Motor neuron (in vitro differentiated cells): ENCODE measurements at regions of chr5 and their contacts with region 1.

Region 1: DNA sequence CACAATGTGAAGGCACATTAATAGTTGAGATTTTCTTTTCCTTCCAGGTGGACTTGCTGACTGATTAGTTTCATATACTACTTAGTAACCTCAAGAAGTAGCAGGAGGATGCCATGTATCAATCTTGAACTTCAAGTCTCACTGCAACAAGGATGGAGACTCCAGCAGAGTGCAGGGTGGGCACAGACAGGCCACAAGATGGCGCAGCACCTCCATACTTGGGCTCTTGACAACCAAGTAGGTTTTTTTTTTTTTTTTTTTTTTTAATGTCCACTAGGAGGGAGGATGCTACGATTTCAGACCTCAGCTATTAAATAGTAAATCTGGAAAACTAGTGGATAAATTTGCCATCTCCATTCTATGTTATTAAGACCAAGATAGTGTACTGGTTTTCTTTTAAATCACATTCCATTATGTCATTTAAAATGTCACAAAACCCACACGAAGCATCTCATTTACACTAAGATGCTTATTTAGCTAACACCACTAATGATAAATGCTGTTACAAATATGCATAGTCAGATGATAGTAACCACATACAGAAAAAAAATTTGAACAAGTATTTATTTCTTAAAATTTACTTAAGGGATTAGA is 58.6 kb downstream of the IL6ST start:
- ATAC-seq: peak; percentile 80 to 93 (median 84)
- H3K4me3 ChIP-seq: no peak overlapping the region
- H3K27ac ChIP-seq: no peak overlapping the region
- H3K4me1 ChIP-seq: no peaks in the 10 kb centered on the region

Region 2: DNA sequence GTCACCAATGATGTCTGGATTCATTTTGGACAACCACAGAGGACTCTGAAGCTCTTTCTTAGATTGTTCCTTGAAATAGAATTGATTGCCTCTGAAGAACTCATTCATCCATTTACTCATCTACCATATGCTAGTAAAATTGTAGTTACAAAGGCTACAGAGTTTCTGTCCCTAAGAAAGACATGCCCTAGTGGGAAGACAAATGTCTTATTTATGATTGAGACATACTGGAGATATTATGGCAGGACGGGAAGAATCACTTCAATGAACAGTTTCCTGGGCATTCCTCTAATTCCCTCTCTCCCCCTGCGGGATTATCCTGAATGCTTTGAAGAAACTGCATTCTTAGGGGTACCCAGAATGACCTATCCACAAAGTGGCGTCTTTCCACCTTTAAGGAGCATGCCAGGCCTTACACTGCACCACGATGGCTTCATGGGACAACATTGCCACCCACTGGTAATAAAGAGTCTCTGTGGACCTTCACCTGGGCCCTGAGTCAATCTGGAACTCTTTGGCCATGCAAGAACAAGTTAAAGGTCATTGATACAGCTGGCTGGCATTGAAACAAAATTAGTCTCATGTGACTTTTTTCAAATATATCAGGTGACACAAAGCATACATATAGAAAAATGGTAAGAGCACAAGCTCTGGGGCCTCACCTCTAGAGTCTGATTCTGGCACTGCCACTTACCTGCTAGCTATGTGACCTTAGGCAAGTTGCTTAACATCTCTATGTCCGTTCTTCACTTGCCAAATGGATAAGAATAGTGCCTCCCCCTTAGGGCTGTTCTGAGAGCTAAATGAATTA is 264.9 kb after region 1 on chr5:
- in situ Hi-C with region 1: loop called in 1 of 9 experiments (anchors 25 kb)
- ATAC-seq: peak; percentile 79 to 100 (median 96)
- H3K4me3 ChIP-seq: no peak overlapping the region
- H3K27ac ChIP-seq: no peak overlapping the region
- H3K4me1 ChIP-seq: no peaks in the 10 kb centered on the region

Region 3: DNA sequence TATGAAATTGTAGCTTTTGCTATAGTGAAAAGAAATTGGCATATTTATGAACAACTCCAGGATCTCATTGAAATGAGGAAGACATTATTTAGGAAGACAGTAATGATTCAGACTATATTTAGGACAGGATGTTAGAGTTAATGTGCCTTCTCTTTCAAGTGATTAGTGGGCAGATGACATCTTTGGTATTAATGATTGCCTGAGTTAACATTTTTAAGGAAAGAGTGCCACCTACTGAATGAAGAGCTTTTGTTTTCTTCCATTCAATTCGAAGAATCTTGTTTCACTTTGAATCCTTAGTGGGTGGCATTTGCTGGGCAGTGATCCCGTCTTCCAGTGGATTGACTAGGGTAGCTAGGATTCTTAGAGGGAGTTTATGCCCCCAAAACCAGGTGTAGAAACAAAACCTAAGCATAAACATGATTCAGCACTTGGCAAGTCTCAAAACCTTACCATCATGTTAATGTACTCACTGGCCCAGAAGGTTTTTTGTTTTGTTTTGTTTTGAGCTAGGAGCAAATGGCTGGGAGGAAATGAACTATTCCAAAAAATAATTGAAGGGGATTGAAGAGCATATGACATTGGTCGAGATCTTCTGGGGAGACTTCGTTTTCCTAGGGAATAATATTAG is 902.3 kb after region 1 on chr5:
- in situ Hi-C with region 1: loop called in 1 of 9 experiments (anchors 25 kb)
- ATAC-seq: peak in 7 of 8 experiments; percentile 48 to 88 (median 68)
- H3K4me3 ChIP-seq: no peak overlapping the region
- H3K27ac ChIP-seq: no peak overlapping the region
- H3K4me1 ChIP-seq: peaks cover 10 to 12% of the 10 kb centered on the region in 2 donors